IMR-90 (cell line): ENCODE measurements at regions of chr4 and their contacts with region 1.

Region 1: GRCh38 chr4:176988226-176988625 is 195.5 kb upstream of the VEGFC start:
- DNase-seq: peak; percentile 99
- ATAC-seq: peak; percentile 100
- H3K4me3 ChIP-seq: no peak overlapping the region
- H3K27ac ChIP-seq: no peak overlapping the region
- H3K4me1 ChIP-seq: no peaks in the 10 kb centered on the region
- H3K27me3 ChIP-seq: no peaks in the 10 kb centered on the region
- CTCF ChIP-seq: no peak
- POLR2A ChIP-seq: no peak
- RAD21 ChIP-seq: peak; percentile 31

Region 2: GRCh38 chr4:176949029-176949428 is 39.2 kb before region 1 on chr4:
- CTCF ChIA-PET with region 1: no interaction called
- POLR2A ChIA-PET with region 1: no interaction called
- dilution Hi-C with region 1: no loop called
- in situ Hi-C with region 1: no loop called
- intact Hi-C with region 1: loop called (anchors 5 kb)
- DNase-seq: peak; percentile 94
- ATAC-seq: peak; percentile 73
- H3K4me3 ChIP-seq: no peak overlapping the region
- H3K27ac ChIP-seq: no peak overlapping the region
- H3K4me1 ChIP-seq: peaks cover 2% of the 10 kb centered on the region; the same call in 1 of the 2 replicates
- H3K27me3 ChIP-seq: no peaks in the 10 kb centered on the region
- CTCF ChIP-seq: no peak
- POLR2A ChIP-seq: no peak
- RAD21 ChIP-seq: no peak

Region 3: GRCh38 chr4:177008071-177008835 is 20.0 kb after region 1 on chr4:
- CTCF ChIA-PET with region 1: no interaction called
- POLR2A ChIA-PET with region 1: no interaction called
- dilution Hi-C with region 1: no loop called
- in situ Hi-C with region 1: no loop called
- intact Hi-C with region 1: loop called (anchors 2 kb)
- DNase-seq: peak; percentile 78
- ATAC-seq: peak; percentile 50
- H3K4me3 ChIP-seq: no peak overlapping the region
- H3K27ac ChIP-seq: no peak overlapping the region
- H3K4me1 ChIP-seq: peaks cover 11% of the 10 kb centered on the region; the same call in 1 of the 2 replicates
- H3K27me3 ChIP-seq: no peaks in the 10 kb centered on the region
- CTCF ChIP-seq: no peak
- POLR2A ChIP-seq: no peak
- RAD21 ChIP-seq: no peak

Region 4: DNA sequence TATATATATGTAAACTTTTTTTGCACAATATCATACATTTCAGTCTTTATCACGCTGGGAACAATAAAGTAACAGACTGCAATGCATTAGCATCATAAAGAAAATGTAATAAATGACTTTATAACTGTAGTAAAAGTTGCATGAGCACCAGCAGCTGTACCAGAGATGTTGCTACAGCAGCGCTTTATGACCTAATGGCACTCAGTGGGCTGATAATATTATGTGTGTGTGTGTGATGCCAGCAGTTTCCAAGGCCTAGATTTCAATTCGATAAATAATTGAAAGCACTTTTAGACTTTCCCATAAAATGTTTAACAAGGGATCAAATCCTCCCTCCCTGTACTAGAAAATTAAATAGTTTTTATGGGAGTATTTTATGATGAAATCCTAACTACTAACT is 821.6 kb after region 1 on chr4:
- CTCF ChIA-PET with region 1: no interaction called
- POLR2A ChIA-PET with region 1: no interaction called
- dilution Hi-C with region 1: no loop called
- in situ Hi-C with region 1: no loop called
- intact Hi-C with region 1: no loop called
- DNase-seq: no peak
- ATAC-seq: no peak
- H3K4me3 ChIP-seq: no peak overlapping the region
- H3K27ac ChIP-seq: no peak overlapping the region
- H3K4me1 ChIP-seq: no peaks in the 10 kb centered on the region
- H3K27me3 ChIP-seq: no peaks in the 10 kb centered on the region
- CTCF ChIP-seq: no peak
- POLR2A ChIP-seq: no peak
- RAD21 ChIP-seq: no peak